GM18951 (cell line): ENCODE measurements at regions of chr9 and their contacts with region 1.

Region 1: GRCh38 chr9:112831281-112831851 is 59.3 kb downstream of the SLC46A2 start:
- POLR2A ChIP-seq: no peak

Region 2: GRCh38 chr9:112890106-112891081 is 59.0 kb after region 1 on chr9 and contains the start of gene SLC46A2:
- in situ Hi-C with region 1: loop called (anchors 10 kb)
- POLR2A ChIP-seq: no peak

Region 3: DNA sequence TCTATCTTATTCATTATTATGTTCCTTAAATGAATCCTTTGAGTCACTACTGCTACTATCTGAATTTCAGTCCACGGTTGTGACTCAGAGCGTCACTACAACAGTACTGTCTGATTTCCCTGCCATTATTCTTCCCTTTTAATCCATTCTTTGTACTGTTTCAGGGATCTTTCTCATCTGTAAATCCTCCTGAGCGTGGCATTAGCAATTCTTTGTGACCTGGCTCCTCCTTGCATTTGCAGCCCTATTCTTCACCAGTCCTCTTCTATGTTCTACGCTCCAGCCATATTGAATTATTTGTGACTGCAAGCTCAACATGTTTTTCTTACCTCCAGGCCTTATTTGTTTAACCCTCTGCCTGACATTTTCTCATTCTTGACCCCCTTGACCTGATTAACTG is 450.0 kb after region 1 on chr9:
- in situ Hi-C with region 1: no loop called
- POLR2A ChIP-seq: no peak

Region 4: DNA sequence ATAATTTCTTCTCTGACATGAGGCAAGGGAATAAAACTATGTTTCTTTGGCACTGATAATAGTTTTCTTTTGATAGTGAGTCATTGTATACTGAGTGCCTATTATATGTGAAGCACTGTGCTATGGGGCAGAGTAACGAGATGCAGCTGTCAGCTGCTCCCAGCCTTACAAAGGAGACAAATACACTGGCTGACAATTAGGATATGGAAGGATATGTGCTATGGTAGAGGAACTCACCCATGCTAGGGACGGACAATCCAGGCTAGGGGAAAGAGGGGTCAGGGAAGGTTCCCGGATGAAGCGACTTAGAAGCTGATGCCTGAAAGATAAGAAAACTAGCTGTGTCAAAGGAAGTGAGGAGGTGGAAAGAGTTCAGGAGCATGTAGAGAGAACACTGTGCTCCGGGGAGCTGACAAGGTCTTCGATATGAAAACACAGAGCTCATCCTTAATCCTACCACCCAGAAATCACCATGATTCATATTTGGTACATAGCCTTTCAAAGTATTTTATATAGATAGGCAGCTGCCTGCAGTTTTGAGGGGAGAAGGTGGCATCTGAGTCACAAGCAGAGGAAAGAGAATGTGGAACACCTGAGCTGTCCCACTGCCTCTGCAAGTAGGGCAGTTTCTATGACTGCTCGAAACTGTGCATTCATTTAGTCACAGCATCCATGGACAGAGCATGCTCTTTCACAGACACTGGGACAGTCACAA is 530.1 kb after region 1 on chr9:
- in situ Hi-C with region 1: no loop called
- POLR2A ChIP-seq: no peak